Naive thymus-derived CD4-positive, alpha-beta T cell (primary cell): ENCODE measurements at regions of chr16 and their contacts with region 1.

Region 1: GRCh38 chr16:30445408-30446202 is at the start of gene SEPHS2:
- DNase-seq: peak; percentile 84 to 96 (median 94)
- ATAC-seq: peak; percentile 96
- H3K4me3 ChIP-seq: peak within 1 kb of the TSS; percentile 97
- H3K4me3 Mint-ChIP-seq: peak within 1 kb of the TSS; percentile 85 to 97 (median 95)
- H3K27ac ChIP-seq: peak within 1 kb of the TSS; percentile 92
- H3K27ac Mint-ChIP-seq: peak within 1 kb of the TSS; percentile 90 to 98 (median 96)
- H3K4me1 ChIP-seq: peaks cover 26 to 37% of the 10 kb centered on the region in 2 donors
- H3K4me1 Mint-ChIP-seq: peaks cover 30 to 47% (median 41%) of the 10 kb centered on the region in 7 donors
- H3K27me3 ChIP-seq: no peaks in the 10 kb centered on the region
- H3K27me3 Mint-ChIP-seq: no peaks in the 10 kb centered on the region
- total RNA-seq, gene SEPHS2: 20.9 to 69.6 (median 47.1) TPM

Region 2: GRCh38 chr16:30472328-30472942 is 26.8 kb after region 1 on chr16 and contains the start of gene ITGAL:
- CTCF ChIA-PET with region 1: interaction called, 13 read pairs
- POLR2A ChIA-PET with region 1: interaction called, 374 read pairs
- intact Hi-C with region 1: loop called (anchors 1 kb)
- DNase-seq: peak; percentile 41 to 89 (median 84)
- ATAC-seq: peak; percentile 89
- H3K4me3 ChIP-seq: peak within 1 kb of the TSS; percentile 74
- H3K4me3 Mint-ChIP-seq: peak within 1 kb of the TSS; percentile 83 to 100 (median 98)
- H3K27ac ChIP-seq: peak within 1 kb of the TSS; percentile 84
- H3K27ac Mint-ChIP-seq: peak within 1 kb of the TSS; percentile 88 to 98 (median 96)
- H3K4me1 ChIP-seq: peaks cover 60 to 63% of the 10 kb centered on the region in 2 donors
- H3K4me1 Mint-ChIP-seq: peaks cover 43 to 83% (median 57%) of the 10 kb centered on the region in 7 donors
- H3K27me3 ChIP-seq: no peaks in the 10 kb centered on the region
- H3K27me3 Mint-ChIP-seq: no peaks in the 10 kb centered on the region
- total RNA-seq, gene ITGAL: 258 to 629 (median 436) TPM

Region 3: GRCh38 chr16:30491744-30492308 is 46.2 kb after region 1 on chr16:
- CTCF ChIA-PET with region 1: interaction called, 6 read pairs
- POLR2A ChIA-PET with region 1: interaction called, 7 read pairs
- intact Hi-C with region 1: loop called in 1 of 2 experiments (anchors 1 kb)
- DNase-seq: peak in 4 of 9 donors; percentile 12 to 22 (median 16)
- ATAC-seq: no peak
- H3K4me3 ChIP-seq: no peak overlapping the region
- H3K4me3 Mint-ChIP-seq: peak overlapping the region in 4 of 10 donors; percentile 26 to 62 (median 35)
- H3K27ac ChIP-seq: peak overlapping the region; percentile 34
- H3K27ac Mint-ChIP-seq: peak overlapping the region; percentile 58 to 92 (median 77)
- H3K4me1 ChIP-seq: peaks cover 0 to 7% of the 10 kb centered on the region in 2 donors
- H3K4me1 Mint-ChIP-seq: peaks cover 16 to 43% (median 21%) of the 10 kb centered on the region in 7 donors
- H3K27me3 ChIP-seq: no peaks in the 10 kb centered on the region
- H3K27me3 Mint-ChIP-seq: no peaks in the 10 kb centered on the region

Region 4: DNA sequence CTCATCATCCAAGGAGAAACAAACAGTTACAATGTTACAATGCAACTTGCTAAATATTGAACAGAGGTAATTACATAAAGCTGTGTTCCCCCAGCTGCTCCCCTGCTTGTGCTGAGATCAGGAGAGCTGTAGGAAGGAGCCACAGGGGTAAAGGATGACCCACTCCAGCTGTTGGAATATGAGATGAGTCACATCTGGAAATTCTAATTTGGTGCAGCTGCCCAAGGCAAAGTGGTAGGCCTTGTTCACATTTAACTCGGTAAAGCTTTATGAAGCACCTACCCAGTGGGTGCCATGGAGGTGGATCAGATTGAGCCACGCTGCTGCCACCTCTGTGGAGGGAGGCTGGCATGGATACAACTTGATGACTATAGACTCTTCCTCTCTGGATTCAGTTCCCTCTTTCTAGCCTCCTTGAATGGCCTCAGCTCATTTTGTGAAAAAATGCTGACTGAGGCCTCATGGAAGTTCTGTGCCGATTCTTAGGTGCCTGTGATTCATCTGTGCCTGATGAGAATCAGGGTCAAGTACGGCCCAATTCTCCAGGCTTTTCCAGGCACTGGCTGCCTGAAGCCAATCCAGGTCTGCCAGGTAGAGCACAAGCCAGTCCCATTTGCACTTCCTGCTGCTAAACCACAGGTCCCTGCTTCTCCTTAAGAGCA is 157.1 kb after region 1 on chr16:
- CTCF ChIA-PET with region 1: interaction called, 3 read pairs
- POLR2A ChIA-PET with region 1: no interaction called
- intact Hi-C with region 1: loop called in 1 of 2 experiments (anchors 1 kb)
- DNase-seq: no peak
- ATAC-seq: peak; percentile 49
- H3K4me3 ChIP-seq: no peak overlapping the region
- H3K4me3 Mint-ChIP-seq: no peak overlapping the region
- H3K27ac ChIP-seq: no peak overlapping the region
- H3K27ac Mint-ChIP-seq: no peak overlapping the region
- H3K4me1 ChIP-seq: no peaks in the 10 kb centered on the region
- H3K4me1 Mint-ChIP-seq: peaks cover 0 to 15% (median 11%) of the 10 kb centered on the region in 7 donors
- H3K27me3 ChIP-seq: no peaks in the 10 kb centered on the region
- H3K27me3 Mint-ChIP-seq: no peaks in the 10 kb centered on the region